Activated T-helper 2 cell treated with anti-CD3 and anti-CD28 coated beads, Interferon-gamma antibody, Interleukin-2, Interleukin-4, amounts not matched to agents 10 μg/mL and 5 μg/mL and 100 μg/mL, durations not matched to agents 14 hours and 24 hours and 36 hours (primary cell): ENCODE measurements at regions of chr1 and their contacts with region 1.

Region 1: GRCh38 chr1:31394628-31395193 is 18.3 kb upstream of the SERINC2 start:
- DNase-seq: peak; percentile 71
- H3K4me3 Mint-ChIP-seq: peak overlapping the region; percentile 82
- H3K27ac Mint-ChIP-seq: no peak overlapping the region
- H3K4me1 Mint-ChIP-seq: peaks cover 9% of the 10 kb centered on the region
- H3K27me3 Mint-ChIP-seq: peaks cover 3% of the 10 kb centered on the region

Region 2: GRCh38 chr1:30840904-30841598 is 553.7 kb before region 1 on chr1:
- intact Hi-C with region 1: no loop called
- DNase-seq: no peak
- H3K4me3 Mint-ChIP-seq: no peak overlapping the region
- H3K27ac Mint-ChIP-seq: no peak overlapping the region
- H3K4me1 Mint-ChIP-seq: no peaks in the 10 kb centered on the region
- H3K27me3 Mint-ChIP-seq: peaks cover 39% of the 10 kb centered on the region

Region 3: DNA sequence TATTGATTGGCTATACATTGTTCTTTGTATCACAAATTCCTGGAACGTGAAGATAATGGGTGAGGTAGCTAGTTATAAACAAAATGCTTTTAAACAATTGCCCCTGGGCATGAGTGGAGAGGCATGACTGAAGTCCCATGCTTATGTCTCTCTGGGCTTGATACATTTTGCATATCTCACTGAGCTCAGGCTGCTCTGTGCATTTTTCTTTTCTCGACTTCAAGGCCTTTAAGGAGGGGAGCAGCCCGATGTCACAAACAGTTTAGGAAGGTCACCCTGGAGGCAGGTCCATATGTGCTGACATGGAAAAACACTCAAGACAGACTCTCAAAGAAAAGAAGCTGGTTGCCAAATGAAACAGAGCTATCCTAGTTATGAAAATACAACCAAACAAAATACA is 249.1 kb before region 1 on chr1:
- intact Hi-C with region 1: no loop called
- DNase-seq: no peak
- H3K4me3 Mint-ChIP-seq: no peak overlapping the region
- H3K27ac Mint-ChIP-seq: no peak overlapping the region
- H3K4me1 Mint-ChIP-seq: no peaks in the 10 kb centered on the region
- H3K27me3 Mint-ChIP-seq: peaks cover under 1% of the 10 kb centered on the region

Region 4: GRCh38 chr1:31422505-31423319 is 28.0 kb after region 1 on chr1:
- intact Hi-C with region 1: loop called (anchors 1 kb)
- DNase-seq: peak; percentile 46
- H3K4me3 Mint-ChIP-seq: no peak overlapping the region
- H3K27ac Mint-ChIP-seq: no peak overlapping the region
- H3K4me1 Mint-ChIP-seq: peaks cover 8% of the 10 kb centered on the region
- H3K27me3 Mint-ChIP-seq: peaks cover 19% of the 10 kb centered on the region

Region 5: DNA sequence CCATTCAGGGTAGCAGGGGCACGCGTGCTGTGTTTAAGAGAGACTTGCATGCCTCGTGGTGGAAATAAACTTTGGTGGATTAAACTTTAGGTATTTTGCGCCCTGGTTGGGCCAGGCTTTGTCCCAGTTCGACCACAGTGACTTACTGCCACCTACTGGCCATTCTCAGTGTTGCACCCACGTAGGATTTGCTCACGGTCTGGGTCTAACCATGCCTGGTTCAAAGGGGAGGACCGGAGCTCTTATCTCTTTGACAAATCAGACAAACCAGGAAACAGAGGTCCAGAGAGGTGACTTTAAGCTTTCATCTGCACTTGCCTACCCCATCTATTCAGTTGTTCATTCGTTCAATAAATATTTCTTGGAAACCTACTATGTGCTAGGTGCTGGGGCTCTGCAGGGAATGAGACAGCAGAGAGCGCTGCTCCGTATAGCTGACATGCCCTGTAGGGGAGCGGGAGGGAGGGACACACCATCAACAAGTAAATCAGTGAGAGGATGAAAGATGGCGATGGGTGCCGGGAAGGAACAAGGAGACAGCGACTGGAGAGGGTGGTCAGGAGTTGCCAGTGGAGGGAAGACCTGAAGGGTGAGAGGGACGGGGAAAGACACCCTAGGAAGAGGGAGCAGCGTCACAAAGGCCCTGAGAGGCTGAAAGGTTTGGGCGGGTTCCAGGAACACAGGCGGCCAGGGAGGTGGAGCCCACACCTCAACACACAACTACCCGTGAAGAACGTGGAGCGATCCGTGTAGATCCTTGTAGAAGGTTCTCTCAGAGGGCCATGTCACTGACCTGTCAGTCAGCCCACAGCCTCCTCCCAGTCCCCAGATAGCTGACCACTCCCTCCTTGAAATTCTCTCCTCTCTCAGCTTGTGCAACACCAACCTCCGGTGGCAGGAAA is 154.4 kb after region 1 on chr1:
- intact Hi-C with region 1: loop called (anchors 1 kb)
- DNase-seq: peak; percentile 87
- H3K4me3 Mint-ChIP-seq: peak overlapping the region; percentile 40
- H3K27ac Mint-ChIP-seq: no peak overlapping the region
- H3K4me1 Mint-ChIP-seq: peaks cover 10% of the 10 kb centered on the region
- H3K27me3 Mint-ChIP-seq: peaks cover 7% of the 10 kb centered on the region